ENCODE measurements at regions of chr3 and their contacts with region 1.

Region 1: DNA sequence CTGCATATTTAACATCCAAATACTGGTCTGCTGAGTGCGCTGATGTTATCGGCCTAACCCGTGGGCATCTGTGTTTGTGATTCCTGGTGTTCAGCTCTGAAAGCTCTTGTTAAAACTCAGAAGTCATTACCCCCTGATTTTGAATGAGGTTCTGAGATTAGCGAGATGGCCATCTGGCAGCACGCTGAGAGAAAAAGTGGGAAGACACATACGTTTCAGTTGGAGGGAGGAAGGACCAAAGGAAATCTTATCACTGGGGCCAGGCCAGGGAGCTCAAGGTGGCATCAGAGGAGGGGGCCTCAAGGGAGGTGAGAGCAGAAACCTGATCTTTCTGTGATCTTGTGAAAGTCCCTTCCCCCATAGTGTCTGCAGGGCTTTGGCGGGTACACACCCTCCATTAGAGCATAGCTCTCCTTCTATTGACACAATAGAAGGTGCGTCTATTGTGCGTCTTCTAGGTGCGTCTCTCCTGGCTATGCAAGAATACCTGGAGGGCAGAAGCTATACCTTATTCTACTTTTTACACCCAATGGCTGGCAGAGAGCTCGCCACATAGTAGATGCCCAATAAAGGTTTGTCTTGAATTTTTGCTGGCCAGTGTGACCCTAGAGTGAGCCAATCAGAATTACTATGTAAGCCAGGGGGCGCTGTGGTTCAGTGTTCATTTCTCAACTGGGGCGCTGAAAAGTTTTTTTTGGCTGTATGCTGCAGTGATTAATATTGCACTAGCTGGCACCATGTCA is 182.4 kb downstream of the SHQ1 start:
- DNase-seq: peak; percentile 82
- H3K4me3 ChIP-seq: no peak overlapping the region; a peak in 1 of 4 replicates
- H3K27ac ChIP-seq: peak overlapping the region in 1 of 2 experiments; percentile 98; a peak in 2 of 4 replicates
- H3K4me1 ChIP-seq: peaks cover 0 to 35% of the 10 kb centered on the region in 2 experiments; a peak in 2 of 4 replicates
- H3K27me3 ChIP-seq: no peaks in the 10 kb centered on the region
- CTCF ChIP-seq: peak; percentile 68
- EP300 ChIP-seq: peak in 1 of 2 experiments; percentile 99; a peak in 2 of 4 replicates
- RAD21 ChIP-seq: peak; percentile 81

Region 2: GRCh38 chr3:71955240-71956068 is 710.4 kb before region 1 on chr3:
- CTCF ChIA-PET with region 1: interaction called, 23 read pairs
- POLR2A ChIA-PET with region 1: interaction called, 3 read pairs
- DNase-seq: peak; percentile 77
- H3K4me3 ChIP-seq: no peak overlapping the region; a peak in 1 of 4 replicates
- H3K27ac ChIP-seq: peak overlapping the region in 1 of 2 experiments; percentile 95; a peak in 2 of 4 replicates
- H3K4me1 ChIP-seq: peaks cover 0 to 23% of the 10 kb centered on the region in 2 experiments; a peak in 2 of 4 replicates
- H3K27me3 ChIP-seq: peaks cover 6% of the 10 kb centered on the region; the same call in 1 of the 2 replicates
- CTCF ChIP-seq: peak; percentile 79
- EP300 ChIP-seq: peak in 1 of 2 experiments; percentile 96; a peak in 2 of 4 replicates
- RAD21 ChIP-seq: peak; percentile 95

Region 3: GRCh38 chr3:72447059-72447946 is 218.6 kb before region 1 on chr3:
- CTCF ChIA-PET with region 1: interaction called, 15 read pairs
- POLR2A ChIA-PET with region 1: interaction called, 8 read pairs
- DNase-seq: peak; percentile 97
- H3K4me3 ChIP-seq: peak overlapping the region in 1 of 2 experiments; percentile 85; a peak in 2 of 4 replicates
- H3K27ac ChIP-seq: peak overlapping the region in 1 of 2 experiments; percentile 92; a peak in 2 of 4 replicates
- H3K4me1 ChIP-seq: peaks cover 4 to 17% of the 10 kb centered on the region in 2 experiments; a peak in 3 of 4 replicates
- H3K27me3 ChIP-seq: no peaks in the 10 kb centered on the region; the same call in 1 of the 2 replicates
- CTCF ChIP-seq: no peak
- EP300 ChIP-seq: no peak
- RAD21 ChIP-seq: no peak

Region 4: DNA sequence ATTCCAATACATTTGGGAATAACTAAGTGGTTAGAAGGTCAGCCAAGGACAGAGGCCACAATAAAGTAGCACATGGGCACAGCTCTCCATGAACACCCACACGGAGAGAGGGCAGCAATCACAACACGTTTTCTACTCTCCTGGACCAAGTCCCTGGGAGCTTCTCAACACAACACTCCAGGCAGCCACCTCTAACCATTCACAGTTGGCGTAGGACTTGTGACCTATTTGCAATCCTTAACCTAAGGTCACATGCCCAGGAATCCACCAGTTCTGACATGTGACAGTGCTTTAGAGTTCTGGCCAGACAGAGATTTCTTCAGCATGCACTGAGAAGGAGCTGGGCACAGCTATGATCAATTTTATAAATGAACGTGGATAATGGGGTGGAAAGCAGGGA is 98.4 kb before region 1 on chr3:
- CTCF ChIA-PET with region 1: interaction called, 13 read pairs
- POLR2A ChIA-PET with region 1: interaction called, 3 read pairs
- DNase-seq: no peak
- H3K4me3 ChIP-seq: no peak overlapping the region
- H3K27ac ChIP-seq: no peak overlapping the region
- H3K4me1 ChIP-seq: peaks cover 0 to 14% of the 10 kb centered on the region in 2 experiments; a peak in 1 of 4 replicates
- H3K27me3 ChIP-seq: no peaks in the 10 kb centered on the region
- CTCF ChIP-seq: no peak
- EP300 ChIP-seq: no peak
- RAD21 ChIP-seq: no peak

Region 5: DNA sequence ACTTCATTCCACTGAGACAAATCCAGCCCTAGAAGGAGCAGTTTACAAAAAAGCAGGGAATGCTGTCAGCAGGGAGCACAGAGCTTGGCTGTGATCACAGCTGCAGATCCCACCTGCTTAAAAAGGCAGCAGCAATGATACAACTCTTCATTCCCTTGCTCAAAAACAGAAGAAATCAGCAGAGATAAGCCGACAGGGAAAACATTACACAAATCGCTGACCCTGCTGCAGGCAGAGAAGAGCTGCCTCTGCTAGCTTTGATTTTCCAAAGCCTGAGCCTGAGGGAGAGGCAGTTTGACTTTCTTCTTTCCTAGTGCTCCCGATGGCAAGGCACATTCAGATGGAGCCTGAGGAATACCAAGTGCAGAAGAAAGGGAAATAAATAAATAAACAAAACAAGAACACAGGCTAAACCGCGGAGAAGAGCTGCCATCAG is 102.2 kb after region 1 on chr3:
- CTCF ChIA-PET with region 1: interaction called, 23 read pairs
- POLR2A ChIA-PET with region 1: interaction called, 8 read pairs
- DNase-seq: no peak
- H3K4me3 ChIP-seq: no peak overlapping the region
- H3K27ac ChIP-seq: peak overlapping the region in 1 of 2 experiments; percentile 98; a peak in 2 of 4 replicates
- H3K4me1 ChIP-seq: peaks cover 0 to 46% of the 10 kb centered on the region in 2 experiments; a peak in 2 of 4 replicates
- H3K27me3 ChIP-seq: no peaks in the 10 kb centered on the region
- CTCF ChIP-seq: no peak
- EP300 ChIP-seq: no peak; a peak in 1 of 4 replicates
- RAD21 ChIP-seq: no peak

Region 6: DNA sequence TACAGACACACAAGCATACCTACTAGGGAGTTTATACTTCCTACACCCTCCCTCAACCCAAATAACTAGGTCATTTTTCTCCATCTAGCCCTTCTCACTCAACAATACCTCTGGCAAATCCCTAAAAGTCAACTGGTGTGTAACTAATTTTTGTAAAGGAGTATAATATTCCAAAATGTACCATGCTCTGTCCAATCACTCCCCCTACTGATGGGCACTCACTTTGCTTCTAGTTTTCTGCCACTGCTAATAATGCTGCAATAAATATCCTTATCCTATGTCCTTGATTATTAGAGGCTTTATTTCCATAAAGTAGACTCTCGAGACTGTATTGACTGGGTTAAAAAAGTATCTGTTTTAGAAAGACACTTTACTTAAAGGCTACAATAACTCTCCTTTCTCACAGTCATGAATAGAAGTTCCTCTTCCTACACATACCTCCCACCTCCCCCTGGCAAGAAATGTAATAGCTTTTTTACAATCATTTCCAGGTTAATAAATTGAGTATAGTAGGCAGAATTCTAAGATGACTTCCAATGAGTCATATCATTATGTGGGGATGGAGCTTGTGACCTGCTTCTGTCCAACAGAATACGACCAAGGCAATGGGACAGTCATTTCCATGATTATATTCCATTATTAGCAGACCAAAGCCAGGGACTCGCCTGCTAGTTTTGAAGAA is 152.4 kb after region 1 on chr3:
- CTCF ChIA-PET with region 1: interaction called, 143 read pairs
- POLR2A ChIA-PET with region 1: interaction called, 7 read pairs
- DNase-seq: peak; percentile 54
- H3K4me3 ChIP-seq: no peak overlapping the region; a peak in 1 of 4 replicates
- H3K27ac ChIP-seq: peak overlapping the region in 1 of 2 experiments; percentile 61; a peak in 3 of 4 replicates
- H3K4me1 ChIP-seq: peaks cover 21 to 25% of the 10 kb centered on the region in 2 experiments
- H3K27me3 ChIP-seq: no peaks in the 10 kb centered on the region
- CTCF ChIP-seq: peak; percentile 67
- EP300 ChIP-seq: 0 out of 4 replicates have a peak, but pooled peaks of 1 of the 2 experiments have one; percentile 10
- RAD21 ChIP-seq: peak; percentile 95